ENCODE measurements at regions of chr19 and their contacts with region 1.

Region 1: GRCh38 chr19:34141025-34141424 is 31.3 kb upstream of the LSM14A start:
- DNase-seq: no peak
- H3K4me3 ChIP-seq: no peak overlapping the region
- H3K27ac ChIP-seq: no peak overlapping the region
- H3K4me1 ChIP-seq: no peaks in the 10 kb centered on the region
- H3K27me3 ChIP-seq: no peaks in the 10 kb centered on the region
- CTCF ChIP-seq: no peak
- POLR2A ChIP-seq: no peak

Region 2: DNA sequence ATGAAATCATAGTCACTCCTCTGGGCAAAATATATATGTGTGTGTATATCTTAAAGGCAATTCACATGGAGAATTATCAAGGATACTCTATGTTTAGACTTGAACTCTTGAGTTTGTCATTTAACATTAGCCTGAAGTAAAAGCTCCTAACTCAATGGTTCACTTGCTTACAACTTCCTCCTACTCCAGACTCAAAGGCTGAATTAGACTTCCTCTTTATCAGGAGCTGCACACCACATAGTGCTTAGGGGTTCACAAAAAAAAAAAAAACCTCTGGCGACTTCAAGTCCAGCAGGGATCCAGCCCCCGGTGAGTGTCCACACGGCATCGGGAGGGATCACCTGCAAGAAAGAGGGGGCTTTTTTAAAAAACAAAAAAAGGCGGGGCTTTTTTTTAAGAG is 36.9 kb before region 1 on chr19:
- intact Hi-C with region 1: loop called (anchors 2 kb)
- DNase-seq: no peak
- H3K4me3 ChIP-seq: no peak overlapping the region
- H3K27ac ChIP-seq: no peak overlapping the region
- H3K4me1 ChIP-seq: no peaks in the 10 kb centered on the region
- H3K27me3 ChIP-seq: no peaks in the 10 kb centered on the region
- CTCF ChIP-seq: no peak
- POLR2A ChIP-seq: no peak